ENCODE measurements at regions of chr4 and their contacts with region 1.

Region 1: GRCh38 chr4:111546881-111547280 is 598.4 kb upstream of the FAM241A start:
- DNase-seq: no peak
- H3K4me3 ChIP-seq: no peak overlapping the region
- H3K27ac ChIP-seq: no peak overlapping the region
- H3K27me3 ChIP-seq: no peaks in the 10 kb centered on the region
- CTCF ChIP-seq: no peak

Region 2: DNA sequence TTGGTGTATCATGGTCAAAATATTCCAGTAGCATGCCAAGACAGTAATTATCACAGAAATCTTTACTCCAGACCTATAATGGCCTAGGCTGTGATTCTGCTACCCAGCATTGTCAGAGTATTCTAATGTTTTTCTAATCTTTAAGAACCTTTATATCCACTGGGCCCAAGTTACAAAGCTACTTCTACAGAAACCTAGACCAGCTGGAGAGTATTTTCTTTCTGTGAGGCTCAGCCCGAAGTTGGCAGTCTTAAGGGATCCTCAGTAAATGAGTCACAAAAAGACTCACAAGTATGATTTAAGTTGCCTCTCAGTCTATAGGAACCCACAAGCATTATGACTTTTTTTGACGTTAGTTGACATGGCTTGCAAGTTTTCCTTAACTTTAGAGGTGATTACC is 40.2 kb before region 1 on chr4:
- CTCF ChIA-PET with region 1: no interaction called
- POLR2A ChIA-PET with region 1: interaction called, 10 read pairs
- DNase-seq: no peak
- H3K4me3 ChIP-seq: no peak overlapping the region
- H3K27ac ChIP-seq: no peak overlapping the region
- H3K27me3 ChIP-seq: no peaks in the 10 kb centered on the region
- CTCF ChIP-seq: no peak

Region 3: DNA sequence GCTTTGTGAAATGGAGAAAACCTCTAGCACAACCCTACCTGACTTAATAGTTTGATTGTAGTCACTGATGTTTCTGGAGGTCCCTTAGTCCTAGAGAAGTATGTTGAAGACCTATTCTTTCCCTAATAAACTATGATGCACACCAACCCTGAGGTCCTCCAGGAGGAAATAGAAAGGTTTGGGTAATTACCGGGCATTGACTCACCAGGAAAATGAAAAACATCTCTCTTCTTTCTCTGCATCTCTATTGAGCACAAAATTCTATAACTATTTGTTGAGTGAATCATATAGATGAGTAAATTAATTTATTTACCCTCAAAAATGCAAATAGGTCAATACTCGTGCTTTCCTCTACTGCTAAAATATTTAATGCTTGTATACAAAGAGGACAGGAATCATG is 15.9 kb after region 1 on chr4:
- CTCF ChIA-PET with region 1: no interaction called
- POLR2A ChIA-PET with region 1: no interaction called
- DNase-seq: peak; percentile 3
- H3K4me3 ChIP-seq: no peak overlapping the region
- H3K27ac ChIP-seq: no peak overlapping the region
- H3K27me3 ChIP-seq: no peaks in the 10 kb centered on the region
- CTCF ChIP-seq: no peak

Region 4: GRCh38 chr4:111937368-111937767 is 390.5 kb after region 1 on chr4:
- CTCF ChIA-PET with region 1: no interaction called
- POLR2A ChIA-PET with region 1: no interaction called
- DNase-seq: no peak
- H3K4me3 ChIP-seq: no peak overlapping the region
- H3K27ac ChIP-seq: no peak overlapping the region
- H3K27me3 ChIP-seq: no peaks in the 10 kb centered on the region
- CTCF ChIP-seq: no peak

Measured in AG04450 (cell line).